A673 (cell line): ENCODE measurements at regions of chr14 and their contacts with region 1.

Region 1: GRCh38 chr14:96100161-96101029 is 61.2 kb downstream of the C14orf132 start:
- DNase-seq: peak; percentile 77
- H3K4me3 ChIP-seq: no peak overlapping the region
- H3K27ac ChIP-seq: no peak overlapping the region
- H3K4me1 ChIP-seq: peaks cover 7% of the 10 kb centered on the region
- H3K27me3 ChIP-seq: no peaks in the 10 kb centered on the region
- CTCF ChIP-seq: peak; percentile 95

Region 2: GRCh38 chr14:95561001-95561412 is 539.4 kb before region 1 on chr14:
- CTCF ChIA-PET with region 1: no interaction called
- POLR2A ChIA-PET with region 1: no interaction called
- intact Hi-C with region 1: loop called (anchors 5 kb)
- DNase-seq: peak; percentile 86
- H3K4me3 ChIP-seq: no peak overlapping the region
- H3K27ac ChIP-seq: no peak overlapping the region
- H3K4me1 ChIP-seq: no peaks in the 10 kb centered on the region
- H3K27me3 ChIP-seq: no peaks in the 10 kb centered on the region
- CTCF ChIP-seq: peak; percentile 98

Region 3: DNA sequence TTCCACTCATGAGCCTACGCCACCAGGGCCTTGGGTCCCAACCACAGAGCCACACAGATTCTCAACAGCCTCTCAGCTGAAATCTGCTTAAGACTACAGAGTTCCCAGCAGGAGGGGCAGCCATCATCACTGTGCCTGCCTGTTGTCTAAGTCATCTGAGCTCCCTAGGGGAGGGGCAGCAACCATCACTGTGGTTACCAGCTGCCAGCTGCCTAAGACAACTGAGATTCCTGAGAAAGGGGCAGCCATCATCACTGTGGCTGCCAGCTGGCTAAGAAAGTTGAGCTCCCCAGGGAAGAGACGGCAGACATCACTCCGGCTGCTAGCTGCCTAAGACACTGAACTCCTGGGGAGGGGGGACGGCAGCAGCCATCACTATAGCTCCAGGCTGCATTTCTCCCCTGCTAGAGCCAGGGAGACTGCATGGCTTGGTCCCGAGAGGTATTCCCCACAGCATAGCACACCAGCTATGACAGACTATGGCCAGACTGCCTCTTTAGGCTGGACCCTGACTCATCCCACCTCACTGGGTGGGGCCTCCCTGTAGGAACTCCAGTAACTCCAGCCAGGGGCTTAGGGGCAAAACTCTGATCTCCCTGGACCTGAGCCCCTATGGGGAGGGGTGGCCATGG is 98.4 kb before region 1 on chr14:
- CTCF ChIA-PET with region 1: interaction called, 33 read pairs
- POLR2A ChIA-PET with region 1: no interaction called
- intact Hi-C with region 1: loop called (anchors 1 kb)
- DNase-seq: peak; percentile 83
- H3K4me3 ChIP-seq: no peak overlapping the region
- H3K27ac ChIP-seq: no peak overlapping the region
- H3K4me1 ChIP-seq: peaks cover 11% of the 10 kb centered on the region
- H3K27me3 ChIP-seq: no peaks in the 10 kb centered on the region
- CTCF ChIP-seq: no peak

Region 4: GRCh38 chr14:96424109-96424989 is 324.0 kb after region 1 on chr14:
- CTCF ChIA-PET with region 1: interaction called, 3 read pairs
- POLR2A ChIA-PET with region 1: no interaction called
- intact Hi-C with region 1: loop called (anchors 1 kb)
- DNase-seq: peak; percentile 86
- H3K4me3 ChIP-seq: peak overlapping the region; percentile 30
- H3K27ac ChIP-seq: no peak overlapping the region
- H3K4me1 ChIP-seq: no peaks in the 10 kb centered on the region
- H3K27me3 ChIP-seq: no peaks in the 10 kb centered on the region
- CTCF ChIP-seq: peak; percentile 84